CD8-positive, alpha-beta T cell (primary cell): ENCODE measurements at regions of chr7 and their contacts with region 1.

Region 1: GRCh38 chr7:124929467-124930172 is at the start of gene POT1:
- DNase-seq: peak; percentile 93 to 100 (median 96)
- ATAC-seq: peak; percentile 96
- H3K4me3 ChIP-seq: peak within 1 kb of the TSS; percentile 56 to 85
- H3K4me3 Mint-ChIP-seq: peak within 1 kb of the TSS; percentile 93
- H3K27ac ChIP-seq: peak within 1 kb of the TSS; percentile 60 to 92
- H3K27ac Mint-ChIP-seq: peak within 1 kb of the TSS; percentile 93
- H3K4me1 ChIP-seq: peaks cover 13% of the 10 kb centered on the region
- H3K4me1 Mint-ChIP-seq: peaks cover 52% of the 10 kb centered on the region
- H3K27me3 ChIP-seq: no peaks in the 10 kb centered on the region
- H3K27me3 Mint-ChIP-seq: no peaks in the 10 kb centered on the region
- CTCF ChIP-seq: no peak
- total RNA-seq, gene POT1: 8.4 to 16.7 TPM

Region 2: DNA sequence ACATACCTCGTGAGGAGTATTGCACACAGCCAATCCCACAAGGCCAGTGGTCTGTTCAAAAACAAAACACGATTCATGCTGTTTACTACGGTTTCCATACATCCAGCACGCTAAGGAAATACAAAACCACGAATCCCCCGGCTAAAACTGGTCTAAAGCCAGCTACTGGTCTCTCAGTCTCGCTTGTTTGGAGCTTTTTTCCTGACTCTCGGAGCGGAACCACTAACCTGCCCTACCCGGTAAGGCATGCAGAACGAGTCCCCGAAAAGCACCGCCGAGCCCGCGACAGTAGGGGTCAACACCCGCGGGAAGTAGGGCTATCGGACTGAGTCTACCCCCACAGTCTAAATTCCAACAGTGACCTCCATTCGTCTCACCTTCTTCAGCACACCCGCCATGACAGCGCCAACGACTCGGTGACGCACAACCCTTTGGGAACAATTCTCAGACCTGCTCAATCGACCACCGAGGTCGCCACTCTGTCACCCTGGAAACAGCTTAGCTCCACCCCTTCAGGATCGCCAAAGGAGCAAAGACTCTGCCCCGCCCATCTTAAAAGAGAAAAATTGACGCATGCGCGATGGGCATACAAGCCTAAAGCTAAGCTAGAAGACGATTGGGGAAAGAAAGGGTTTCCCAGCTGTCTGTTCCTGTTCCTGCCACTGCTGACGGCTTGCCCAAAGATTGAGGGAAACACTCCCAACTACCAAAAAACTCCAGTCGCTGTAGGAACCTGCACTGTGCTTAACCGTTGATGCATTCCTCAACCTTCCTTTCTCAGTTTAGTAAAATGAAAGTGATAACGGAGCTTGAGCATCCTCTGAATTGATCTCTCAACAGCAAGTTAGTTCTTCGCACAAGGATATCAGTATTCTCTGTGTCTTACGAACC is 1372.0 kb before region 1 on chr7 and contains the start of gene NDUFA5:
- CTCF ChIA-PET with region 1: no interaction called
- POLR2A ChIA-PET with region 1: no interaction called
- intact Hi-C with region 1: loop called (anchors 5 kb)
- DNase-seq: peak; percentile 93 to 100 (median 96)
- ATAC-seq: peak; percentile 96
- H3K4me3 ChIP-seq: peak within 1 kb of the TSS; percentile 80 to 90
- H3K4me3 Mint-ChIP-seq: no peak within 1 kb of the TSS
- H3K27ac ChIP-seq: peak within 1 kb of the TSS; percentile 84 to 85
- H3K27ac Mint-ChIP-seq: no peak within 1 kb of the TSS
- H3K4me1 ChIP-seq: peaks cover 26% of the 10 kb centered on the region
- H3K4me1 Mint-ChIP-seq: peaks cover 16% of the 10 kb centered on the region
- H3K27me3 ChIP-seq: no peaks in the 10 kb centered on the region
- H3K27me3 Mint-ChIP-seq: peaks cover 2% of the 10 kb centered on the region
- CTCF ChIP-seq: no peak
- total RNA-seq, gene NDUFA5: 62.4 to 70.6 TPM